SK-N-SH (cell line): ENCODE measurements at regions of chr2 and their contacts with region 1.

Region 1: DNA sequence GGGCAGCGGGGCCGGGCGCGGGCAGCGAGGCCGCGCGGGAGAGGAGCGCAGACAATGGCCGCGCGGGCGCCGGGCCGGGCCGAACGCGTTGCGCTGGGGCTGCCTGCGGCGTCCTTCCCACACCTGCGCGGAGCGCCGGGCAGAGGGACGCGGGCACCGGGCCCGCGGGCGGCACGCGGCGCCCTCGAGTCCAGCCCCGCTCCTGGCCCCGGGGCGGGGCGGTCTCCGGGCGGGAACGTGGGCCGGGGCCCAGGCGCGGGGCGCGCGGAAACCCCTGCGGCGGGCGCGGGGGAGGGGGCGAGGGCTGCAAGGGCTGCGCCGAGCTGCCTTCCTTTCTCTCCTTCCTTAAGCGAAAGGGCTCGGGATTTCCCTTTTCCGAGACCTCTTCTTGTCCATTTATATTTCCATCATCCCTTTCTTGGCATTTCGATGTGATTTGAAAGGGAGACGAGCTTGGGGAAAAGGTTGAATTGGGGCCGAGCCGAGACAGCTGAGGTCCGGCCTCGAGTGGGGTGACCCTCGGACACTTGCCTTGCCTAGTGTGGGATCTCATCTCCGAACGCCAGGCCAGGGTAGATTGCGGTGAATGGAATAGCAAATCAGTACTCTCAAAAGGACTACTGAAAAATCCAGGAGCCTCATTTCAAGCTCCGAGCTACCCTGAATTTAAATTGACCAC is 676 bp downstream of the KLHL23 start:
- DNase-seq: peak; percentile 83
- H3K4me3 ChIP-seq: peak overlapping the region; percentile 73 to 80
- H3K27ac ChIP-seq: peak overlapping the region in 1 of 2 experiments; percentile 86; a peak in 2 of 4 replicates
- H3K4me1 ChIP-seq: peaks cover 0 to 27% of the 10 kb centered on the region in 2 experiments; a peak in 2 of 4 replicates
- H3K27me3 ChIP-seq: no peaks in the 10 kb centered on the region
- CTCF ChIP-seq: no peak
- EP300 ChIP-seq: no peak
- RAD21 ChIP-seq: no peak

Region 2: GRCh38 chr2:169716238-169716886 is 17.9 kb before region 1 on chr2:
- CTCF ChIA-PET with region 1: interaction called, 9 read pairs
- POLR2A ChIA-PET with region 1: interaction called, 50 read pairs
- DNase-seq: peak; percentile 73
- H3K4me3 ChIP-seq: peak overlapping the region; percentile 50 to 61; a peak in 3 of 4 replicates
- H3K27ac ChIP-seq: peak overlapping the region in 1 of 2 experiments; percentile 100; a peak in 2 of 4 replicates
- H3K4me1 ChIP-seq: peaks cover 16 to 59% of the 10 kb centered on the region in 2 experiments; a peak in 2 of 4 replicates
- H3K27me3 ChIP-seq: no peaks in the 10 kb centered on the region
- CTCF ChIP-seq: no peak
- EP300 ChIP-seq: peak in 1 of 2 experiments; percentile 91; a peak in 3 of 4 replicates
- RAD21 ChIP-seq: peak; percentile 30; the same call in 1 of the 2 replicates